ENCODE measurements at regions of chr1 and their contacts with region 1.

Region 1: DNA sequence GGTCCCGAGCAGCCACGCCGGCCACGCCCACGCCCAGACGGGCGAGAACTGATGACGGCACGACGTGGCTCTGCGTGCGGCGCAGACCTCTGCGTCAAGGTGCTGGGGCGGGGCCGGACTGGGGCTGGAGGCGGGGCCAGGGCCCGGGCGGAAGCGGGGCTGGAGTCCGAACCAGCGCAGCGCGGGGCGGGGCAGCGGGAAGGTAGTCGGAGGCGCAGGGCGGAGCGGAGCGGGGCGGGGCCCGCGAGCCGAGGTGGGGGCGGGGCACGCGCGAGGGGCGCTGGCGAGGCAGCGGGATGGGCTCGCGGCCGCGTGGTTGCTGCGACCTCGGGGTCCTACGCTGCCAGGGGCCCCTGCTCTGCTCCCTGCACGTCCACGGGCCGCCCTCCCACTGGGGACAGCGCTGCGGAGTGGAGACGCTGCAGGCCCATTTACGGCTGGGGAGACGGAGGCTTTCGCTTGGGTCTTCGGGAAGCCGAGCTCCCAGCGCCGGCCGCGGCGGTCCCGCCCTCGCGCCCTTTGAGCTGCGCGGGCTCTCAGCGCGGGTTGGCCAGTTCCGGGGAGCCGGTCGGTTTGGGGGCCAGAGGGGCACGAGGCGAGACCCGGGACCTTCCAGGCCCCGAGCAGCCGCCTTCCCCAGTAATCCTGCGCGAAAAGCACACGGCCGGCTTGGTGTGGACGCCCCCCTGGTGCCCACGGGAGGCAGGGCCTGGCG is at the start of gene PEX10:
- DNase-seq: peak; percentile 99
- ATAC-seq: peak; percentile 97
- total RNA-seq, gene PEX10: 14.5 TPM

Region 2: DNA sequence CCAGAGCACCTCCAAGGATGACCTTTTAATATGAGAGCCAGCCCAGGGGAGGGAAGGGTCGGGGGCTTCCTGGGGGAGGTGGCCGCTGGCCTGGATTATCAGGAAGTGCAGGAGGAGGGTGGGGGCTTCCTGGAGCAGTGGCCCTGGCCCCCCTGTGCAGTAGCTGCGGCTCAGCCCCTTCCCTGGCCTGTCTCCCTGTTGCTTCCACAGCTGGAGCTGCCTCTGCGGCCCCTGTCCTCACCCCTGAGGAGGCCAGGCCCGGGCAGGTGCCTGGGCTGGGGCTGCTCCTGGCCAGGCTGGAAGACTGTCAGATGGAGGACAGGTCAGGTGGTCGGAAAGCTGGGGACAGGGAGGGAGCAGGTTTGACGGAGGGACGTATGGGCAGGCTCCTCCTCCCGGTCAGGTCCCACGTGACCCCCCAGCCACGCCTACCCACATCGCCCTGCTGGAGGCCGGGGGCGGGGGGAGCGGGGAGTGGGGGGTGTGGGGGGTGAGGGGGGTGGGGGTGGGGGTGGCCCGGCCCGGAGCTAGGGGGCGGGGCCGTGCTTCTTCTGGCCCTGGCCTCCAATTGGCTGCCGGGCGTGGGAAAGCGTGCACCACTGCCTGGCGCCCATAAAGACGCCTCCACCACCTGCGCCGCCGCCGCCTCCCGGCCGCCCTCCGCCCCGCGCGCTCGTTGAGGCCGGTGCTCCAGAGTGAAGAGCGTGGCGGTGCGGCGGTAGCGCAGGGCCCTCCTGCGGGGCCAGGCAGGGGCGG is 133.3 kb after region 1 on chr1:
- intact Hi-C with region 1: loop called (anchors 1 kb)
- DNase-seq: peak; percentile 95
- ATAC-seq: peak; percentile 72

Region 3: DNA sequence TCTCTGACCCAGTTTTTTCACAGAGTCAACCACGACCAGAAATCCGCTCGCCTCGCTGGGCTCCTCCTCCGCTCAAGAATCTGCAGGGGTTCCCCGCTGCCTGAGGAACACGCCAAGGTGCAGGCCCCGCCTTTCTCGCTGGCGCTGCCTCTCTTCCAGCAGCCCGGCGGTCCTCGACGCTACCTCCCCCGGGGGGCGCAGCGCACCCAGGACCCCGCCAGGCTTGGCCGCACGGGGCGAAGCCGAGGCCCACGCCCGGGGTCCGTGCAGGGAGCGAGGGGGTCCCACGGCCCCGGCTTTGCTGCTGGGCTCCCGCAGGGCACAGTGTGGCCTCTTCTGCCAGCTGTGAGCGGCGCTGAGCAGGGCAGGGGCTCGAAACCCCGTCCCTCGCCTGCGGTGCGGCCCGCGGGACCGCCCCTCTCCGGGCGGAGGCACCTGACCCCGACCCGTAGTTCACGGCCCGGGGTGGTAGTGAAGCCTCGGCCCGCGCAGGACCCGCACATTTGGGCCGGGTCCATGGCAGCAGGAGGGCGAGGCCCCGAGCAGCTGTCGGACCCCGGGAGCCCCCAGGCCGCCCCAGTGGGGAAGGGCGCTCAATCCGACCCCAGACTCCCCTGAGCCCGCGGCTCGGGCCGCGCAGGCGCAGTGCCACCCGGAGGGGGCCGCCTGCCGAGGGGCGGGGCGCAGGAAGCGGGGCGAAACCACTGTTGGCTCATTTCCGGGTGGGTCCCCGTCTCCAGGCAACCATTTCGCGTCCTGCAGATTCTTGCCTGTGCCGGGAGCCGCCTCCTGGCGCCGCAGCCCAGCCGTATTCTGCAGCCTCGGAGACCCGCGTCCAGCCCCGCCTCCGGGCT is 230.1 kb after region 1 on chr1:
- intact Hi-C with region 1: loop called (anchors 10 kb)
- DNase-seq: peak; percentile 91
- ATAC-seq: peak; percentile 86

Region 4: GRCh38 chr1:2786329-2787162 is 373.9 kb after region 1 on chr1:
- intact Hi-C with region 1: loop called (anchors 2 kb)
- DNase-seq: peak; percentile 75
- ATAC-seq: no peak

Measured in Right ventricle myocardium inferior (tissue), 1 donor.